MCF 10A (cell line): ENCODE measurements at regions of chr4 and their contacts with region 1.

Region 1: DNA sequence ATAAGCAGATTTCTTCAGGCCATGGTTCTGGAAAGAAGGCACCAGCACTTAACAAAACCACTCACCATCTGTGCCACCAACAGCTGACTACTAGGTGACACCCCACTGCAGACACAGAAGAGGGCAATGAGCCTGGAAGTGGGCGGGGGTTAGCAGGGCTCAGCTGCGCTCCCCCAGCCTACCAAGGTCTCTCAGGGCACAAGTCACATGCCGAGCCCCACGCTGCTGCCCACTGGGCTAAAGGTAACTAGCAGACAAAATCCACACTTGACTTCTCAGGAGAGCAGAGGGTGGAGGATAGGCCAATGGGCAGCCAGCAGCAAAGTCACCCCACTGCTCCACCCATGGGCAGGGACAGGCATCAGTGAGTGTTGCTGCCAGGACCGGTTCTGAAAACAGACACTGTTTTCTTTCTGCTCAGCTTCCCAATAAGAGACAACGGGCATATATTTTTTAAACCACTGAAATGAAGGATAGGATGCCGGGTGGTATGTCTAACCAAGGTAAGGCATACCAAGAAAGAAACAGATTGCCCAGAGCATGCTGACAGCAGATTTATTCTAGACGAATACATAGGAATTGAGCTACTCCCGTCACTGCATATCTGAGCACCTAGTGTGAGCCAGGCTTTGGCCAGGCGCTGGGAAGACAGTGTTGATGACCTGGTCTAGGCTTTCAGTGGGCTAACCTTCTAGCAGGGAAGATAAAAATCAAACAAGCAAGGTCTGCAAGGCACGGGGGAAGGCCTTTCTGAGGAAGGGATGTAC is 20.1 kb downstream of the ACSL1 start:
- DNase-seq: peak; percentile 61
- H3K4me3 Mint-ChIP-seq: peak overlapping the region; percentile 72
- H3K27ac Mint-ChIP-seq: peak overlapping the region; percentile 43
- H3K4me1 Mint-ChIP-seq: peaks cover 69% of the 10 kb centered on the region
- H3K27me3 Mint-ChIP-seq: no peaks in the 10 kb centered on the region
- CTCF ChIP-seq: no peak

Region 2: GRCh38 chr4:184792950-184793555 is 12.6 kb before region 1 on chr4:
- CTCF ChIA-PET with region 1: interaction called, 3 read pairs
- POLR2A ChIA-PET with region 1: interaction called, 10 read pairs
- intact Hi-C with region 1: no loop called
- DNase-seq: peak; percentile 93
- H3K4me3 Mint-ChIP-seq: no peak overlapping the region
- H3K27ac Mint-ChIP-seq: peak overlapping the region; percentile 67
- H3K4me1 Mint-ChIP-seq: peaks cover 58% of the 10 kb centered on the region
- H3K27me3 Mint-ChIP-seq: no peaks in the 10 kb centered on the region
- CTCF ChIP-seq: no peak

Region 3: GRCh38 chr4:186249785-186250754 is 1444.4 kb after region 1 on chr4:
- CTCF ChIA-PET with region 1: no interaction called
- POLR2A ChIA-PET with region 1: no interaction called
- intact Hi-C with region 1: no loop called
- DNase-seq: peak; percentile 25
- H3K4me3 Mint-ChIP-seq: no peak overlapping the region
- H3K27ac Mint-ChIP-seq: no peak overlapping the region
- H3K4me1 Mint-ChIP-seq: no peaks in the 10 kb centered on the region
- H3K27me3 Mint-ChIP-seq: no peaks in the 10 kb centered on the region
- CTCF ChIP-seq: no peak